Endothelial cell of umbilical vein (primary cell): ENCODE measurements at regions of chr21 and their contacts with region 1.

Region 1: DNA sequence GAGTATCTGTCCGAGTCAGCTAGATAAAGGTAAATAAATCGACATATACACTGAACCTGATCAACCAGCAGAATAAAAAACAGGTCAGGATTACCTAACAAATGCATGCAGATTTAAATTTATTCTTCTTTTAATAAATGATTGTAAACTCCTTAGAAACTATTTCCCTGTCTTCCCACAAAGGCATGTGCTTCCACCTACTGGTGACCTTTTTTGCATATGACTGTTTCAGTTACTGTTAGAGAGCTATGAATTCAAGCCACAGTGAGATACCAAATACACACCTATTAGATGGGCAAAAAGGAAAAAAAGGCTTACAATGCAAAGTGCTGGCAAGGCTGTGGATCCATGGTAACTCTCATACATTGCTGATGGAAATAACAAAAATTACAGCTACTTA is 957.4 kb upstream of the NCAM2 start:
- DNase-seq: peak; percentile 14
- H3K4me3 ChIP-seq: no peak overlapping the region
- H3K27ac ChIP-seq: no peak overlapping the region
- H3K4me1 ChIP-seq: no peaks in the 10 kb centered on the region
- H3K27me3 ChIP-seq: no peaks in the 10 kb centered on the region
- CTCF ChIP-seq: peak in 1 of 2 donors; percentile 20
- POLR2A ChIP-seq: no peak

Region 2: DNA sequence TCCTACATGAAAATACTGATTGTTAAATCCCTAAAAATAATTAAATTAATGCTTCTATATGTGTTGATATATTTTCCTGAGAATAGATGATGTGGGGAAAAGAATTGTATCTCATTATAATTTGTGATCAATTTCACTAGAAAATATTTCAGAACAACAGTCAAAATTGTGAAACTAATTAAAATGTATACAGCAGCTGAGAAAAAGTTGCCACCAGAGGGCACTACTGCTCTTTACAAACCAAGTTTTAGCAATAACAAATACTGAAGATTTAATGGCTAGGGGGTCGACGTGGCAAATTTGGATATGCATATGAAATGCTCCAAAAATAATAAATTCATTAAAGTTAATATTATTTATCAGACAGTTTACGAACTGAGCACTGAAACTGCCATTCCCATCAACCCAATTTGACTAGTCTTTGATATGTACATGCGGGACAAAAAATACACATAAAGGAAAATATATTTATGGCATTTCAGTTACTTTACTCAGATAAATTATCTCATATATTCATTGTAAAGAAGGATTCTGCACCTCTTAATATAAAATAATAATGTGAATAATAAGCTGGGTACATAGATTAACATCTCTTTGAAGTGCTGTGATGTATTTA is 1540.9 kb before region 1 on chr21:
- CTCF ChIA-PET with region 1: interaction called, 3 read pairs
- POLR2A ChIA-PET with region 1: no interaction called
- dilution Hi-C with region 1: no loop called
- intact Hi-C with region 1: loop called (anchors 2 kb)
- DNase-seq: peak; percentile 35
- H3K4me3 ChIP-seq: no peak overlapping the region
- H3K27ac ChIP-seq: no peak overlapping the region
- H3K4me1 ChIP-seq: no peaks in the 10 kb centered on the region
- H3K27me3 ChIP-seq: no peaks in the 10 kb centered on the region
- CTCF ChIP-seq: peak; percentile 49 to 55
- POLR2A ChIP-seq: no peak

Region 3: GRCh38 chr21:19565570-19565969 is 475.2 kb before region 1 on chr21:
- CTCF ChIA-PET with region 1: no interaction called
- POLR2A ChIA-PET with region 1: no interaction called
- dilution Hi-C with region 1: no loop called
- intact Hi-C with region 1: loop called (anchors 5 kb)
- DNase-seq: no peak
- H3K4me3 ChIP-seq: no peak overlapping the region
- H3K27ac ChIP-seq: no peak overlapping the region
- H3K4me1 ChIP-seq: no peaks in the 10 kb centered on the region
- H3K27me3 ChIP-seq: no peaks in the 10 kb centered on the region
- CTCF ChIP-seq: no peak
- POLR2A ChIP-seq: no peak

Region 4: DNA sequence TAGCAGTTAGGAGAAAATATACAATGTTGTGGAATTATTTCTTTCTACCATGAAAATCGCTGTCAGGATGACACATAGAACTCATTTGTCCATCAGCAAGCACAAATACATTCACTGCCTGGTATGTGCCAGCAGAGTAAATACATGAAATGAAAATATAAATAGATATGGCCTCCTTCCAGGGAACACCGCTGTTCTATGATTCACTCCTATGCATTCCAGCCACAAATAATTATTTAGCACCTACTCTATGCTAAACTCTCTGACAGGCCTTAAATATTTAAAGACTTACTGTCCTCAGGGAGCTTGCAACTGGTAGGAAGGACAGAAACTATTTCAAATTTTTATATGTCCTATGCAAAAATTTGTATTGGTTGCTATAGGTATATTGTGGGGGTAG is 17.6 kb before region 1 on chr21:
- CTCF ChIA-PET with region 1: no interaction called
- POLR2A ChIA-PET with region 1: no interaction called
- dilution Hi-C with region 1: no loop called
- intact Hi-C with region 1: no loop called
- DNase-seq: no peak
- H3K4me3 ChIP-seq: no peak overlapping the region
- H3K27ac ChIP-seq: no peak overlapping the region
- H3K4me1 ChIP-seq: no peaks in the 10 kb centered on the region
- H3K27me3 ChIP-seq: no peaks in the 10 kb centered on the region
- CTCF ChIP-seq: no peak
- POLR2A ChIP-seq: no peak